ENCODE measurements at regions of chr1 and their contacts with region 1.

Region 1: DNA sequence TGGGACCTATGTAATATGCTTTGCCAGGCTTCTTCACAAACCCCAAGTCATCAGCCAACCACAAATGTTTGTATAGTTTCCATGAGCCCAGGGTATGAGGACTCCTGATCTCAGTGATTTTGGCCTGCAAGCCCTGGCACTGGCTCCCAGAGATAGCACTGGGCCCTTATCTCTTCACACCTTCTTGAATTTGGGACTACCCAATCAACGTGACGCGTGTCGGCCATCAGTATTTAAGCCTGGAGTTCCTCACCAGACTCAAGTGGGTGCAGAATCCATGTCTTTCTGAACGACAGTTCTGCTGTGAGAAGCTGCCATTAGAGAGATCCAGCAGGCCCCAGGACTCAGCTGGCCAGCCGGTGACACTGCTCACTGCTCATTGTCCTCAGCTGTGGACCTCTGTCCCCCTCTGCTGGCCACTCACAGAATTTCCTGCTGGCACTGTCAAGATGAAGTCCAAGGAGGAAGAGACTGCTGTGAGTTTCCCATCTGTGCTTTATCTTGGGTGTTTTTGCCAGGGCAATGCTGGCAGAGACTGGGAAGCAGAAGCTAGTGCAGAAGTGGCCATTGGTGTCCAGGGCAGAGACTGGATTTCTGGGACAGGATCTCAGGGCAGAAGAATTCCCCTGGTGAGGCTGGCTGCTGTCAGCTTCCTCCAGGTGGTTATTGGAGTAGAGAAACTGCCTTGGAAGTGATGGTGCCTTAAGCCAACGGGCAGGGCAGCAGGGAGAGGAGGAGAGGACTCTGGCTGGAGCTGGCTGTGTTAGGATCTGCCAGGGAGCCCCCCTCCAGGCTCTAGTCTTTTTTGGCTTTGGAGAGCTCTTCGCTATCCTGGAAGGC is 28.4 kb downstream of the TMCC2 start:
- DNase-seq: peak; percentile 88
- H3K4me3 ChIP-seq: no peak overlapping the region
- H3K27ac ChIP-seq: no peak overlapping the region
- H3K4me1 ChIP-seq: peaks cover 4% of the 10 kb centered on the region; the same call in 1 of the 2 replicates
- H3K27me3 ChIP-seq: no peaks in the 10 kb centered on the region

Region 2: DNA sequence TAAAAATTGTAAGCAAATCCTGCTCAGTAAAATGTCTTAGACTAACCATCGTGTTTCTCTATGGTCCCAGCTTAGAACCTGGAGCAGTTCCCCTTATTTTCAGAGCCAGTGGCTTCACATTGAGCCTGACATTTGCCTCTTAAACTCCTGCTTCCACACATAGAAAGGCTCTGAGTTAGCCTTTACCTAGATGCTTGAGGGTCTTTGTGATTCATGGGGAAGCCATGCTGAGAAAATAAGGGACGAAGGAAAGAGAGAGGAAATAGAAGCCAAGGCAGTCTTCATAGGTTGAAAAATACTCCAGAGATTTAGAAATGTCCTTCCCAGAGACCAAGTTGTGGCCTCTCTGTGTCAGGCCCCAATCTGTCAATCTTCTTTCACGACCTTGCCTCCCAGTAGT is 118.3 kb before region 1 on chr1:
- in situ Hi-C with region 1: loop called (anchors 10 kb)
- DNase-seq: no peak
- H3K4me3 ChIP-seq: no peak overlapping the region
- H3K27ac ChIP-seq: no peak overlapping the region
- H3K4me1 ChIP-seq: peaks cover 8% of the 10 kb centered on the region; the same call in 1 of the 2 replicates
- H3K27me3 ChIP-seq: no peaks in the 10 kb centered on the region